K562 (cell line): ENCODE measurements at regions of chr3 and their contacts with region 1.

Region 1: DNA sequence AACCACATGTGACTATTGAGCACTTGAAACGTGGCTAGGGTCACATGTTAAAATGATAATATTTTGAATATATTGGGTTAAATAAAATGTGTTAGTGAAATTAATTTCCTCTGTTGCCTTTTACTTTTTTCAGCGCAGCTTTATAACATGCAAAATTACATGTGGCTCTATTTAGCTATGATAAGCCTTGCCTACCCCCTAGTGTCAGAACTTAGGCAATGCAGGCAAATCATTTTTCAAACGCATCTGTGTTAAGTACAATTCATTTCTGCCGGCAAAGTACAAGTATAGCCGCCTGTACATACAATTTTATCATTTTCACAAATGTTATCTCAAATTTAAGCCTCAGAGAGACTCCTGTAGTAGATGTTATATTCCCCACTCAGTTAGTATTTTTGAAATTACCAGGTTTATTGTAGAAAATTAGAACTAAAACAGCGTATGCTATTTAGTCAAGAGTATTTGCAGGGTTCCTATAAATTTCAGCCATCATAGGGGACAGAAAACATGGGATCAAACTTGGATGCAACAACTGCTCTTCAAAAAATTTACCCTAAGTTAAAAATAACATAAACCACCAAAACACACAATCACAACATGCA is 56.1 kb downstream of the TAFA4 start:
- DNase-seq: peak; percentile 14 to 55 (median 43)
- ATAC-seq: peak; percentile 79
- H3K4me3 ChIP-seq: no peak overlapping the region
- H3K27ac ChIP-seq: no peak overlapping the region
- H3K4me1 ChIP-seq: no peaks in the 10 kb centered on the region
- H3K27me3 ChIP-seq: no peaks in the 10 kb centered on the region
- CTCF ChIP-seq: peak; percentile 47 to 77 (median 63); a peak in 5 of 6 replicates
- EP300 ChIP-seq: no peak
- POLR2A ChIP-seq: no peak
- RAD21 ChIP-seq: peak; percentile 75 to 84

Region 2: GRCh38 chr3:66971891-66972551 is 1904.2 kb before region 1 on chr3:
- CTCF ChIA-PET with region 1: interaction called, 3 read pairs
- POLR2A ChIA-PET with region 1: no interaction called
- in situ Hi-C with region 1: no loop called
- intact Hi-C with region 1: loop called (anchors 10 kb)
- DNase-seq: peak; percentile 60 to 85 (median 65)
- ATAC-seq: peak; percentile 99
- H3K4me3 ChIP-seq: peak overlapping the region; percentile 17; the same call in 1 of the 2 replicates
- H3K27ac ChIP-seq: no peak overlapping the region
- H3K4me1 ChIP-seq: peaks cover 0 to 3% of the 10 kb centered on the region in 2 experiments; a peak in 1 of 5 replicates
- H3K27me3 ChIP-seq: no peaks in the 10 kb centered on the region; a peak in 1 of 5 replicates
- CTCF ChIP-seq: peak; percentile 76 to 84 (median 80)
- EP300 ChIP-seq: no peak
- POLR2A ChIP-seq: no peak
- RAD21 ChIP-seq: peak; percentile 85 to 91

Region 3: GRCh38 chr3:67123914-67124313 is 1752.3 kb before region 1 on chr3:
- CTCF ChIA-PET with region 1: no interaction called
- POLR2A ChIA-PET with region 1: no interaction called
- in situ Hi-C with region 1: loop called (anchors 10 kb)
- intact Hi-C with region 1: no loop called
- DNase-seq: no peak
- ATAC-seq: no peak
- H3K4me3 ChIP-seq: no peak overlapping the region
- H3K27ac ChIP-seq: no peak overlapping the region
- H3K4me1 ChIP-seq: no peaks in the 10 kb centered on the region
- H3K27me3 ChIP-seq: no peaks in the 10 kb centered on the region
- CTCF ChIP-seq: no peak
- EP300 ChIP-seq: no peak
- POLR2A ChIP-seq: no peak
- RAD21 ChIP-seq: no peak

Region 4: GRCh38 chr3:67384760-67385397 is 1491.3 kb before region 1 on chr3:
- CTCF ChIA-PET with region 1: interaction called, 4 read pairs
- POLR2A ChIA-PET with region 1: no interaction called
- in situ Hi-C with region 1: no loop called
- intact Hi-C with region 1: loop called (anchors 5 kb)
- DNase-seq: peak; percentile 37 to 63 (median 38)
- ATAC-seq: peak; percentile 93
- H3K4me3 ChIP-seq: no peak overlapping the region
- H3K27ac ChIP-seq: no peak overlapping the region
- H3K4me1 ChIP-seq: no peaks in the 10 kb centered on the region; a peak in 1 of 5 replicates
- H3K27me3 ChIP-seq: no peaks in the 10 kb centered on the region
- CTCF ChIP-seq: peak; percentile 57 to 67 (median 60)
- EP300 ChIP-seq: no peak
- POLR2A ChIP-seq: no peak
- RAD21 ChIP-seq: peak; percentile 20 to 58; a peak in 2 of 4 replicates

Region 5: DNA sequence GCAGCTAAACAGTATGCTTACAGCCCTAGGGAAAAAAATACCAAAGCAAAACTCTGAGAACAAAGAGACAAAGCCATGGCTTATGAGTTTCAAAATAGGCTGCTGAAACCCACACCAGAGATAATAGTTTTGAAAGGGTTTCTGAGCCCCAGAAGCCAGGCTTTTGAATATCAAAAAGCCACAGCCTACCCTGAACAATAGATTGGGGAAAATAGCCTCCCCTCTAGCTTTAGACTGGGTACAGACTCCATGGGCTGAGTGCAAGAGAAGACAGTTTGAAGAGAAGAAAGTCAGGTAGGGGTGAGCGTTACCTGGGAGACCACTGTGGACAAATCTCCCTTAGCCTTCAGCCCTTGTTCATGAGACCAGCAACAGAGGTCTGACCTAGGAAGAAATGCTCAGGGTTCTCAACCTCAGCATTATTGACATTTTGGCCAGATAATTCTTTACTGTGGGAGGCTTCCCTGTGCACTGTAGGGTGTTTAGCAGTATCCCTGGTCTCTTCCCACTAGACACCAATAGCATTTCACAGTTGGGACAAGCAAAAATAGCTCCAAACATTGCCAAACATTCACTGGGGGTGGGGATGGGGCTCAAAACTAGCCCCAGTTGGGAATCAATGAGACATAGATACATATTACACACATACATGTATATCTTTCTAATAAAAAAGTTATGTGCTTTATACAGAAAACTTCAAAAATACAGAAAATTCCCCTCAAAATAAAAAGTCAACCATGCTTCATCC is 67.7 kb after region 1 on chr3:
- CTCF ChIA-PET with region 1: no interaction called
- POLR2A ChIA-PET with region 1: no interaction called
- in situ Hi-C with region 1: no loop called
- intact Hi-C with region 1: no loop called
- DNase-seq: no peak
- ATAC-seq: no peak
- H3K4me3 ChIP-seq: no peak overlapping the region
- H3K27ac ChIP-seq: no peak overlapping the region
- H3K4me1 ChIP-seq: no peaks in the 10 kb centered on the region
- H3K27me3 ChIP-seq: no peaks in the 10 kb centered on the region
- CTCF ChIP-seq: no peak
- EP300 ChIP-seq: no peak
- POLR2A ChIP-seq: no peak
- RAD21 ChIP-seq: no peak